ENCODE measurements at regions of chr5 and their contacts with region 1.

Region 1: DNA sequence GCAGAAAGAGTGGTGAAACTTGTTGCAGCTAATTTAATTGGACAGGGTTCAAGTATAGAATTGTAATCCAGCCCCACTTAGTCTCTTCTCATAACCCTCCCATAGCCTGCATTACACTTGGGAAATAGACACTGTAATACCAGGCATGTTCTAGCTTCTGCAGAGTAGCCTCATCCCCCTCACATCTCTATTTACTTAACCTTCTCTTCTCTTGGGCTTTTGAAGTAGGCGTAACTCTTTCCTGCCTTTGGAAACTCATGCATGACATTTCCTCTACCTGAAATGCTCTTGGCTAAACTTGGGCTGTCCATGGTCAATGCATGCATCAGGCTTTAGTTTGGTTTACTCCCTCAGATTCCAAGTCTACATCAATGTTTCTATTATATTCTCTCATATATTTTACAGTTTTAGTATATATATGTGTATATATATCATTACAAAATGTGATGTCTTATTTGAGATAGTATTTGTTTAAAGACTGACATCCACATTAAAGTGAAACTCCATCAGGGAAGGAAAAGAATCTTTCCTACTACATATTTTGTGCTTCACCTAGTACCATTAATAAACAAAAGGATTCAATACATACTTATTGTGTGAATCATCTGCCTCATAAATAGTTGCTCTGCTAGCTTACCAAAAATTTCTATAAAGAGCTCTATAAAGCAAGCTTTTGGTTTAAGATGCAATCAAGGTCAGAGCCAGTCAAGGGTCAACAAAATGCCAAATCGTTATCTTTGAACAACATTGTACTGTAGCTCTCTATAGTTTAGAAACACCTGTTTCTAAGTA is 1158.0 kb downstream of the MAT2B start:
- DNase-seq: no peak
- ATAC-seq: peak; percentile 63
- H3K4me3 ChIP-seq: no peak overlapping the region
- H3K27ac ChIP-seq: no peak overlapping the region
- H3K4me1 ChIP-seq: no peaks in the 10 kb centered on the region
- H3K27me3 ChIP-seq: no peaks in the 10 kb centered on the region
- CTCF ChIP-seq: no peak

Region 2: GRCh38 chr5:164148292-164148691 is 515.1 kb before region 1 on chr5:
- CTCF ChIA-PET with region 1: no interaction called
- POLR2A ChIA-PET with region 1: no interaction called
- in situ Hi-C with region 1: no loop called
- intact Hi-C with region 1: no loop called
- DNase-seq: no peak
- ATAC-seq: no peak
- H3K4me3 ChIP-seq: no peak overlapping the region
- H3K27ac ChIP-seq: no peak overlapping the region
- H3K4me1 ChIP-seq: no peaks in the 10 kb centered on the region
- H3K27me3 ChIP-seq: no peaks in the 10 kb centered on the region
- CTCF ChIP-seq: no peak

Region 3: DNA sequence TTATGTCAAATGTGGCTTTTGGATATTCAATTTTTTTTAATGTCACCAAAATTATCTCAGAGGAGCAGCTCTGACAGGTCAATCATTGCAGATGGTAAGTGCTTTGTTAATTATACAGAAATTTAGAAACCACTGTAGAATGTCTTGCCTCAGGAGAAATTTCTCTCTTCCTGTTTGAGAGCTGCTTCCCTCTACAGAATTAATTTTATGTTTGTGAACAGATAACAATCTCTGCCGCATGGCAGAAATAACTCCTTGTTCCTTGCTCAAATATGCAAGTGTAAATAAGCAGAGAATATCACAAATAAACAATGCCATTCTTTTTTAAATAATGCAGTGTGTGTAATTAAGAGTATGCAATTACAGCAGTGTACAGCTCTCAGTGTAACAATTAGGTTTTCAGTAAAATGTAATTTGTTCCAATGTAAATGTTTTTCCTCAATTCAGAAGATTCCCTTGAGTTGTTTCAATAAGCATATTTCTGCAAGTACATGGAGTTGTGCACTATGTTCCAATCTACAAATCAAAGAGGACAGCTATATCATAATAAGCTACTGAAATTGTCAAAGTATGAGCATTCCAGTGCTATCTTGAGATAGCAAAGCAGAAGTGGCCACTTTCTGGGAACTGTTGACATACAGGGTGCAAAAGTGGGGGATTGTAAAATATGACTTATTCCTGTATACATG is 145.2 kb before region 1 on chr5:
- CTCF ChIA-PET with region 1: no interaction called
- POLR2A ChIA-PET with region 1: no interaction called
- in situ Hi-C with region 1: no loop called
- intact Hi-C with region 1: loop called (anchors 10 kb)
- DNase-seq: no peak
- ATAC-seq: peak; percentile 79
- H3K4me3 ChIP-seq: no peak overlapping the region
- H3K27ac ChIP-seq: peak overlapping the region; percentile 63
- H3K4me1 ChIP-seq: peaks cover 7% of the 10 kb centered on the region; the same call in 1 of the 2 replicates
- H3K27me3 ChIP-seq: no peaks in the 10 kb centered on the region
- CTCF ChIP-seq: no peak

Region 4: GRCh38 chr5:165119175-165119574 is 455.8 kb after region 1 on chr5:
- CTCF ChIA-PET with region 1: no interaction called
- POLR2A ChIA-PET with region 1: no interaction called
- in situ Hi-C with region 1: no loop called
- intact Hi-C with region 1: no loop called
- DNase-seq: no peak
- ATAC-seq: no peak
- H3K4me3 ChIP-seq: no peak overlapping the region
- H3K27ac ChIP-seq: no peak overlapping the region
- H3K4me1 ChIP-seq: no peaks in the 10 kb centered on the region
- H3K27me3 ChIP-seq: no peaks in the 10 kb centered on the region
- CTCF ChIP-seq: no peak